CD4-positive, alpha-beta memory T cell (primary cell): ENCODE measurements at regions of chr11 and their contacts with region 1.

Region 1: GRCh38 chr11:116787786-116788486 is at the start of gene ZPR1:
- DNase-seq: peak; percentile 86 to 89 (median 86)
- H3K4me3 ChIP-seq: peak within 1 kb of the TSS; percentile 55 to 90
- H3K4me3 Mint-ChIP-seq: peak within 1 kb of the TSS; percentile 91 to 98 (median 97)
- H3K27ac ChIP-seq: peak within 1 kb of the TSS; percentile 84
- H3K27ac Mint-ChIP-seq: peak within 1 kb of the TSS; percentile 96 to 99 (median 98)
- H3K4me1 ChIP-seq: peaks cover 40% of the 10 kb centered on the region
- H3K4me1 Mint-ChIP-seq: peaks cover 30 to 66% (median 45%) of the 10 kb centered on the region in 4 donors
- H3K27me3 ChIP-seq: no peaks in the 10 kb centered on the region
- H3K27me3 Mint-ChIP-seq: peaks cover 0 to 2% of the 10 kb centered on the region in 2 donors
- total RNA-seq, gene ZPR1: 59.5 to 73.4 TPM

Region 2: DNA sequence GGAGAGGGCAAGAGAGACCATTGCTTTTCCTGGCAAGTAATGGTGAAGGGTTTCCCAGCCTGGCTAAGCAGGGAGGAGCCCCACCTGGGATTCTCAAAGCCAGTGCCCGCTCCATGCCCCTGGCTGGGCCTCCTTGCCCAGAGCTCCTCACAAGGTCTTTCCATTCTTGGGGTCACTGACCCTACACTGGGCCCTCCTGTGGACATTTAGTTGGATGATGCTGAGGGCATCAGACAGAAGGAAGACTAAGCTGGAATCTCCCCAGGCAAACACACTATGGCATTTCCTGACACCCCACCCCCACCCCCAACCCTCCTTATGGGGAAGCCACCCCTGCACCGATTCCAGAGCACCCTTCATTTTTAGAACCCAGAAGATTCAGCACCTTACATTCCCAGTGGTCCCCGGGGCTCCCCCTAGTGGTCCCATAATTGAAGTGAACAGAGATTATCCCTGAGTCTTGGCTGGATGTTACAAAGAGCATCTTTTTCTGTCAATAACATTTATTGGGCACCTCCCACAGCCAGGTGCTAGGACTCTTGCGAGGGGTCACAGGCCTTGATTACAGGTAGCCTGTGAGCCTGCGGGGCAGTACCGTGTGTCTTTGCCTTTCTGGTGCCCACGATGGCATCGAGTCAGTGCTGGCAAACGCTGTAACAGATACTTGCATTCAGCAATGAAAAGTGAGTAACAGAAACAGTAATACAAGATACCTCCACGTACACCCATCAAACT is 563.6 kb before region 1 on chr11:
- CTCF ChIA-PET with region 1: no interaction called
- POLR2A ChIA-PET with region 1: no interaction called
- intact Hi-C with region 1: no loop called
- DNase-seq: peak in 3 of 5 donors; percentile 4 to 16 (median 6)
- H3K4me3 ChIP-seq: no peak overlapping the region
- H3K4me3 Mint-ChIP-seq: no peak overlapping the region
- H3K27ac ChIP-seq: no peak overlapping the region
- H3K27ac Mint-ChIP-seq: no peak overlapping the region
- H3K4me1 ChIP-seq: no peaks in the 10 kb centered on the region
- H3K4me1 Mint-ChIP-seq: no peaks in the 10 kb centered on the region
- H3K27me3 ChIP-seq: no peaks in the 10 kb centered on the region
- H3K27me3 Mint-ChIP-seq: peaks cover 8 to 10% of the 10 kb centered on the region in 2 donors

Region 3: DNA sequence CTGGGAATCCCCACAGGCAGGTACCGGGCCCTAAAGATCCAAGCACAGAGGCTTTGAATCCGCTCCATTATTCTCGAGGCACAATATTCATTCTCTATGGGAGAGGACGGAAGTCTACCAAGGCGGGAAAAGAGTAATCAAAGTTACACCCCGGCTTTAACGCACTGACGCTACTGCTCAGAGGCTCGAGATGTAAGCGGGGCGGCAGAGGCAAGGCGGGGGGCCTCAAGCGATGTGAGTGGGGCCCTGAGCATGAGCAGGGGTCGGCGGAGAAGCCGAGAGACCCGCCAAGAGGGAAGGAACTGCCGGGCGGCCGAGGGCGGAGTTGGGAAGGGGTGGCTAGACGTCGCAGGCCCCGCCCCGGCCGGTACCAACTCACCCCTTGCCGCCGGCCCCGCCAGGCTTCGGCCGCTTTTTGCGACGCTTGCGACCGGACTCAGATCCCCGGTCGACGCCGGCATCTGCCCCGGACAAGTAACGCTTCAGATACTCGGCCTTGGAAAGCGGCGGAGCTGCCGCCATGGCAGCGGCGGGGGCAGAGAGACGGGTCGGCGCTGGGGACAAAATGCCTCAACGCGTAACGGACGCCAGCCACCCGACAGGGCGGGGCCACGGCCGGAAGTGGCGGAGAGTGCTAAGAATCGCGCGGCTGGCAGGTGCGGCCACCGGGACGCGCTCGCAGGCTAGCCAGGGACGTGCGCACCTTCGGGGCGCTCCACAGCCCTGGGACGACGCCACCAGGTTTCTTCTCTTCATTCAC is 15.3 kb before region 1 on chr11 and contains the start of gene BUD13:
- CTCF ChIA-PET with region 1: interaction called, 46 read pairs
- POLR2A ChIA-PET with region 1: interaction called, 100 read pairs
- intact Hi-C with region 1: loop called (anchors 1 kb)
- DNase-seq: peak; percentile 92 to 96 (median 93)
- H3K4me3 ChIP-seq: peak within 1 kb of the TSS; percentile 71 to 93
- H3K4me3 Mint-ChIP-seq: peak within 1 kb of the TSS; percentile 97 to 100 (median 98)
- H3K27ac ChIP-seq: peak within 1 kb of the TSS; percentile 94
- H3K27ac Mint-ChIP-seq: peak within 1 kb of the TSS; percentile 94 to 99 (median 98)
- H3K4me1 ChIP-seq: peaks cover 24% of the 10 kb centered on the region
- H3K4me1 Mint-ChIP-seq: peaks cover 24 to 47% (median 35%) of the 10 kb centered on the region in 4 donors
- H3K27me3 ChIP-seq: no peaks in the 10 kb centered on the region
- H3K27me3 Mint-ChIP-seq: no peaks in the 10 kb centered on the region
- total RNA-seq, gene BUD13: 19.9 to 23.1 TPM

Region 4: GRCh38 chr11:116879800-116880625 is 92.1 kb after region 1 on chr11:
- CTCF ChIA-PET with region 1: interaction called, 28 read pairs
- POLR2A ChIA-PET with region 1: no interaction called
- intact Hi-C with region 1: no loop called
- DNase-seq: peak; percentile 39 to 56 (median 50)
- H3K4me3 ChIP-seq: no peak overlapping the region
- H3K4me3 Mint-ChIP-seq: no peak overlapping the region
- H3K27ac ChIP-seq: no peak overlapping the region
- H3K27ac Mint-ChIP-seq: peak overlapping the region; percentile 35 to 79 (median 64)
- H3K4me1 ChIP-seq: no peaks in the 10 kb centered on the region
- H3K4me1 Mint-ChIP-seq: peaks cover 10 to 12% (median 11%) of the 10 kb centered on the region in 4 donors
- H3K27me3 ChIP-seq: no peaks in the 10 kb centered on the region
- H3K27me3 Mint-ChIP-seq: no peaks in the 10 kb centered on the region